Right cardiac atrium (tissue), 5 donors: ENCODE measurements at regions of chr1 and their contacts with region 1.

Region 1: GRCh38 chr1:2194898-2195673 is 514 bp upstream of the FAAP20 start:
- DNase-seq: peak; percentile 92 to 97 (median 96)
- ATAC-seq: peak; percentile 80
- H3K4me3 ChIP-seq: peak overlapping the region; percentile 71
- H3K27ac ChIP-seq: peak overlapping the region; percentile 87
- H3K4me1 ChIP-seq: peaks cover 3% of the 10 kb centered on the region
- H3K27me3 ChIP-seq: no peaks in the 10 kb centered on the region

Region 2: GRCh38 chr1:2314803-2315673 is 120.0 kb after region 1 on chr1:
- intact Hi-C with region 1: loop called in 1 of 4 experiments (anchors 10 kb)
- DNase-seq: peak; percentile 76 to 91 (median 91)
- ATAC-seq: peak; percentile 20 to 22
- H3K4me3 ChIP-seq: peak overlapping the region; percentile 64
- H3K27ac ChIP-seq: peak overlapping the region; percentile 19
- H3K4me1 ChIP-seq: peaks cover 5% of the 10 kb centered on the region
- H3K27me3 ChIP-seq: no peaks in the 10 kb centered on the region

Region 3: GRCh38 chr1:2381741-2382620 is 186.9 kb after region 1 on chr1:
- intact Hi-C with region 1: loop called (anchors 2 kb)
- DNase-seq: peak; percentile 89 to 95 (median 94)
- ATAC-seq: peak; percentile 94 to 95
- H3K4me3 ChIP-seq: no peak overlapping the region
- H3K27ac ChIP-seq: no peak overlapping the region
- H3K4me1 ChIP-seq: no peaks in the 10 kb centered on the region
- H3K27me3 ChIP-seq: no peaks in the 10 kb centered on the region